ENCODE measurements at regions of chr18 and their contacts with region 1.

Region 1: GRCh38 chr18:46481048-46481846 is 175.8 kb downstream of the LOXHD1 start:
- DNase-seq: no peak
- H3K4me3 ChIP-seq: no peak overlapping the region
- H3K27ac ChIP-seq: no peak overlapping the region
- H3K4me1 ChIP-seq: no peaks in the 10 kb centered on the region
- H3K27me3 ChIP-seq: no peaks in the 10 kb centered on the region
- CTCF ChIP-seq: peak in 1 of 3 donors; percentile 14
- EP300 ChIP-seq: no peak
- POLR2A ChIP-seq: no peak

Region 2: DNA sequence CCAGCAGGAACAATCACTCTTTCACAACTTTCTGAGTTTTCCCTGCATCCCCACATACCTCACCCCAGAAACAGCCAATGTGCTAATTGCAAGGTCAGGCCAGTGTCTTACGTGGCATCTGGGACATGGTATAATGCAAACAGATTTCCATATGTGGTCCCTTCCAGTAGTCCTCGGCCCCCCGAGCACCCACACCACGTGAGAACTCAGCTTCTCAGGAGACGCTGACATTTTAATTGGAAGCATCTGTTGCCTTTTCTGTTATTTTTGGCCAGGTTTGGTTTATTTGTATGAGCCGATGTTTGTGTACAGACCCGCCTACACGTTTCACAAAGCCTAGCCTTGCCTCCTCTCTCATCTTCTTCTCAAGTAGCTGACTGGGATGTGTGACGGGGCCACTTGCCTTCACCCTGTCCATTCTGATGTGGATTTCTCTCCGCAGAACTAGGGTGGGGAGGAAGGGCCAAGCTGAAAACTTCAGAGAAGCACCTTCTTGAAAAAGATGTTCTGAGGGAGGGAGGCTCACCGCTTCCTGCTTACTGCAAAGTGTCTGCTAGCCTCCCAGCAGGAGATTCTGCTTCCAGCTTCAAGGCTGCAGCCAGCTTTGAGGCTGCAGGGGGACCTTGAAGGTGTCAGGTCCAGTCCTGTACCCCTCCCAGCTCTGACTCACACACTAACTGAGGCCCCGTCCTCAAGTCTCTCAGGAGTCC is 975.6 kb before region 1 on chr18:
- intact Hi-C with region 1: loop called in 1 of 4 experiments (anchors 10 kb)
- DNase-seq: no peak
- H3K4me3 ChIP-seq: no peak overlapping the region
- H3K27ac ChIP-seq: no peak overlapping the region
- H3K4me1 ChIP-seq: peaks cover 2% of the 10 kb centered on the region
- H3K27me3 ChIP-seq: no peaks in the 10 kb centered on the region
- CTCF ChIP-seq: no peak
- EP300 ChIP-seq: no peak
- POLR2A ChIP-seq: no peak

Region 3: DNA sequence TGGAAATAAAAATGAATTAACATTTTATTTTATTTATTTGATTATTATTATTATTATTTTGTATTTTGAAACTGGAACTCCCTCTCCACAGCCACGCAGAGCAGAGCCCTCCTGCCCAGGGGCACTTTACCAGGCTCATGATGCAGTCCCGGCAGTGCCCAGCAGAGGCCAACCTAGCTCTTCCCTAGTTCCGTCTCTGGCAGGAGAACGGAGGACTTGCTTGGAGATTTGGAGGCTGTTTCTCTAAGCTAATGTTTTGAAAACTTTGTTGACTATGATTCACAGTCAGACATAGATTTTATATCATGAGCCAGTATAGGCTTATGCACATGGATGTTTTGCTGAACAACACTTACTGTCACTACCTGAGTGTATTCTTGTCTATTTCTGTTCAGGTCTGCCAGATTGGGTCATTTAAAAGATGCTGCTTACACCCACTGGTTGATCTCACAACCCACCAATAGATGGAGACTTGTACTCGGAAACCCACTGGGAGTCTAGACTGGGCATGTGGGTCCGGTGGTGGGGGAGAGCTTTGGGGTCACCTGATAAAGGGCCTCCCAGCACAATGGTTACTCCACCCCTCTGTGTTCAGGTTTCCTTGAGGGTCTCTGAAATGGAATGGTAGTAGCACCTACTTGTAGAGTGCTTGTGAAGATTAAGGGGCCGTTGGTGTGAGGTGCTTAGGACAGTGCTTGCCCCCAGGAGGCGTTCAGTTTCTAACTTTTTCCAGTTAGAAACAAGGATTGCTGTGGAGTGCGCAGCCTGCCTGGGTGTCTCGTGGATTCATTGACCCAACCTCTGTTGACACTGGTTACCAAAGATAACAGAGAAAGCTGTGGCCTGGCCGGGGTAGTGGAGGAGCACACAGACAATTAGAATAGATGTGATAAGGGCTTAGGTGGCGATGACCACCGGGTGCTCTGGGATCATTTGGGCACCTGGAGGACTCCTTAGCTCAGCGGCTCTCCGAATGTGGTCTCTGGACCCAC is 199.8 kb before region 1 on chr18:
- intact Hi-C with region 1: loop called in 2 of 4 experiments (anchors 10 kb)
- DNase-seq: peak; percentile 24 to 76 (median 49)
- H3K4me3 ChIP-seq: no peak overlapping the region
- H3K27ac ChIP-seq: no peak overlapping the region
- H3K4me1 ChIP-seq: no peaks in the 10 kb centered on the region
- H3K27me3 ChIP-seq: no peaks in the 10 kb centered on the region
- CTCF ChIP-seq: peak; percentile 15 to 48 (median 43)
- EP300 ChIP-seq: no peak
- POLR2A ChIP-seq: no peak

Region 4: DNA sequence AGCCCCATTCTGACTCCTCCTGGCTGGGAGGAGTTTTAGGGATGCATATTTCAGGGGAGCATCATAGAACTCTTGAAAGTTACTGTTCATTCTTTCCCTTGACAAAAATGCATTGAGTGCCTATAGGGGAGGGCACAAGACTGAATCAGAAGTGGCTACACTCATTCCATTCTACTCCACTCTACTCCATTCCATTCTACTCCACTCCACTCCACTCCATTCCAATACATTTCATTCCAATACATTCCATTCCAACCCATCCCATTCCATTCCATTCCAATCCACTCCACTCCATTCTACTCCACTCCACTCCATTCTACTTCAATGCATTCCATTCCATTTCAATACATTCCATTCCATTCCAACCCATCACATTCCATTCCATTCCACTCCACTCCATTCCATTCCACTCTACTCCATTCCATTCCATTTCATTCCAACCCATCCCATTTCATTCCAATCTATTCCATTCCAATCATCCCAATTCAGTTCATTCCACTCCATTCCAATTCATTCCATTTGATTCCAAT is 64.9 kb after region 1 on chr18:
- intact Hi-C with region 1: no loop called
- DNase-seq: no peak
- H3K4me3 ChIP-seq: no peak overlapping the region
- H3K27ac ChIP-seq: no peak overlapping the region
- H3K4me1 ChIP-seq: no peaks in the 10 kb centered on the region
- H3K27me3 ChIP-seq: no peaks in the 10 kb centered on the region
- CTCF ChIP-seq: no peak
- EP300 ChIP-seq: no peak
- POLR2A ChIP-seq: no peak